Natural killer cell (primary cell): ENCODE measurements at regions of chr7 and their contacts with region 1.

Region 1: DNA sequence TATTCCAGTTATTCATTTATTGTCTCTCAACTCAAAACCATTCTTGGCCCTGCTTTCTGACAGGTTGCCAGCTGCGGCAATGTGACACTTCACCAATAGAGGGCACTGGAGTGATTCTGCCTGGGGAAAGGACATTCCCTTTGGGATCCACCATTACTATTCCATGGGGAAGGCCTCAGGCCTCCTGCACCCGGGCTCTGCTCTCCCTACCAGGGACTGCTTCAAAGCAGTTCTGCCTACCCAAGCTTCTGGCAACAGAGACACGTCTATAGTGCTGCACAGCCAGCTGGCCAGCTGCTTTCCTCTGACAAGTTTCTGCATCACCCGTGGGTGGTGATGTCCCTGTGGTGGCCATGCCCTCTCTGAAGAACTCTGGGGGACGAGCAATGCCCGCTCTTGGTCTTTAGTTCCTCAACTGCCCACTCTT is 163.8 kb downstream of the ELMO1 start:
- DNase-seq: peak in 1 of 2 donors; percentile 64
- ATAC-seq: peak in 1 of 3 donors; percentile 49
- H3K4me3 ChIP-seq: no peak overlapping the region
- H3K4me3 Mint-ChIP-seq: no peak overlapping the region
- H3K27ac ChIP-seq: no peak overlapping the region
- H3K27ac Mint-ChIP-seq: peak overlapping the region in 1 of 2 donors; percentile 23
- H3K4me1 ChIP-seq: peaks cover 11% of the 10 kb centered on the region
- H3K4me1 Mint-ChIP-seq: peaks cover 58 to 64% of the 10 kb centered on the region in 2 donors
- H3K27me3 ChIP-seq: no peaks in the 10 kb centered on the region
- H3K27me3 Mint-ChIP-seq: no peaks in the 10 kb centered on the region
- CTCF ChIP-seq: peak; percentile 79

Region 2: DNA sequence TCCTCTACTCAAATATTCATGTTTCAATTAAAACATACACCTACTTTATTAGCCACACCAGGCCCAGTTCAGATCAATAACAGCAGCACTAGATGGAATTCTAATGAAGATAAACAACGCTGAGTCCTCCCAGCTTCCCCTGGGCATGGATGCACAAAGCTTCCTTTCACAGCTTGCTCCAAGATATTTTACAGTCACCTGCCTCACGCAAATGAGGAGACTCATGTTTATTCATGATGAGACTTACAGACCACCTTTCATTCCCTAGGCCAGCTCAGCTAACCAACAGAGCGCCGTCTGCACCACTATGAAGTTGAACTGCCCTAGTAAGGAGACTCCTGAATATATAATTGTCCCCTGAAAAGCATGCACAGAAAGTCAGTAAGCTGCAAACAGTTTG is 277.6 kb before region 1 on chr7:
- intact Hi-C with region 1: no loop called
- DNase-seq: no peak
- ATAC-seq: no peak
- H3K4me3 ChIP-seq: no peak overlapping the region
- H3K4me3 Mint-ChIP-seq: no peak overlapping the region
- H3K27ac ChIP-seq: no peak overlapping the region
- H3K27ac Mint-ChIP-seq: no peak overlapping the region
- H3K4me1 ChIP-seq: no peaks in the 10 kb centered on the region
- H3K4me1 Mint-ChIP-seq: peaks cover 33 to 39% of the 10 kb centered on the region in 2 donors
- H3K27me3 ChIP-seq: no peaks in the 10 kb centered on the region
- H3K27me3 Mint-ChIP-seq: no peaks in the 10 kb centered on the region
- CTCF ChIP-seq: no peak

Region 3: DNA sequence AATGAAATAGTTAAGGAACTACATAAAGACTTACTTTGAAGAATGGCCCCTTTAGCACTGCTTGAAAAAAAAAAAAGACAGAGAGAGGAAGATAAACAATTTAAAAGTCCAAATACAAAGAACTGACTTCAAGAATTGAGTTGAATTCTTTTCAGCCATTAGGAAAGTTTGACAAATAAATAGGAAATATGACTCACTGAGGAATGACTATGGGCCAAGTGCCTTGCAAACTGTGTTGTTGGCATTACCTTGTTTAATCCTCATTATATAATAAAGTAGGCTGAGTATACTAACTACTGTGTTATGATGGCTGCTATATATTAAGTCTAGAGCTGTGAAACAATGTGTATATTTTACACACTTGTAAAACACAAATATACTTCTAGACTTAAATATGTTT is 12.7 kb after region 1 on chr7:
- intact Hi-C with region 1: no loop called
- DNase-seq: no peak
- ATAC-seq: no peak
- H3K4me3 ChIP-seq: no peak overlapping the region
- H3K4me3 Mint-ChIP-seq: no peak overlapping the region
- H3K27ac ChIP-seq: no peak overlapping the region
- H3K27ac Mint-ChIP-seq: no peak overlapping the region
- H3K4me1 ChIP-seq: no peaks in the 10 kb centered on the region
- H3K4me1 Mint-ChIP-seq: peaks cover 5 to 6% of the 10 kb centered on the region in 2 donors
- H3K27me3 ChIP-seq: no peaks in the 10 kb centered on the region
- H3K27me3 Mint-ChIP-seq: no peaks in the 10 kb centered on the region
- CTCF ChIP-seq: no peak

Region 4: DNA sequence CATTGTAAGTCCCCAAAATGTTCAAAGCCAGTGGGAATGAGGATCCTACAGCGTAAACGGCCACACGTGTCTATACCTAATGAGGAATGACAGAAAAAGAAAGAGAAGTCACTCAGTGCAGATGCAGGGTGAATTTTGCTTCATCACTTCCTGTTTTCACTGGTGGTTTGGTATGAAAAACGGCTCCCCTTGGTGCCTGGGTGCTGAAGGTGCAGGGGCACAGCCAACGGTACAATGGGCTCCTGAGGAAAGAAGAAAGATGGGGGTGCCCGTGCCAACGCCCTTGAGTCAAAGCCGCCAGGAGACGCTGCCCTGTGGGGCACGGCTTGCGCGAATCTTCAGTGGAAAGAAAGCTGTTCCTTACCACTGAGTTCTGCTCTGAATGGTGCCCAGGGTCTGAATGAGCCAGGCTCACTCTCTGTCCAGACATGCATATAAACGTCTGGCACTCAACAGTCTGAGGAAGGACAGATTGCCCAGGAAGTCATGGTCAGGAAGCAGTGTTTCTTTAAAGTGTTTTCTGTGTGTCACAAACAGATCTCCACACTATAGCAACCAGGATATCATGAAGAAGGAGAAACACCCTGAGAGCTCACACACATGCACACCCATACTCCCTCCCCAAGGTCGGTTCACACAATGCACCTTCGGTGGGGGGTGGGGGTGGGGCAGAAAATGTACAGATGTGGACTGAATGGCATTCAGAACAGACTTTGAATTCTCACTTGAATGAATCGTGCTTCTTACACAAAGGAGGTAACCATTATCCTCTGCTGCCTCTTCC is 58.1 kb after region 1 on chr7:
- intact Hi-C with region 1: loop called (anchors 2 kb)
- DNase-seq: peak; percentile 38 to 85
- ATAC-seq: peak; percentile 83 to 91 (median 84)
- H3K4me3 ChIP-seq: peak overlapping the region; percentile 47
- H3K4me3 Mint-ChIP-seq: peak overlapping the region; percentile 88
- H3K27ac ChIP-seq: peak overlapping the region; percentile 62
- H3K27ac Mint-ChIP-seq: peak overlapping the region; percentile 84 to 91
- H3K4me1 ChIP-seq: peaks cover 22% of the 10 kb centered on the region
- H3K4me1 Mint-ChIP-seq: peaks cover 34 to 36% of the 10 kb centered on the region in 2 donors
- H3K27me3 ChIP-seq: no peaks in the 10 kb centered on the region
- H3K27me3 Mint-ChIP-seq: no peaks in the 10 kb centered on the region
- CTCF ChIP-seq: no peak

Region 5: GRCh38 chr7:37495574-37496184 is 210.9 kb after region 1 on chr7:
- intact Hi-C with region 1: loop called (anchors 5 kb)
- DNase-seq: peak in 1 of 2 donors; percentile 60
- ATAC-seq: peak in 2 of 3 donors; percentile 40 to 51
- H3K4me3 ChIP-seq: no peak overlapping the region
- H3K4me3 Mint-ChIP-seq: no peak overlapping the region
- H3K27ac ChIP-seq: no peak overlapping the region
- H3K27ac Mint-ChIP-seq: no peak overlapping the region
- H3K4me1 ChIP-seq: no peaks in the 10 kb centered on the region
- H3K4me1 Mint-ChIP-seq: no peaks in the 10 kb centered on the region
- H3K27me3 ChIP-seq: no peaks in the 10 kb centered on the region
- H3K27me3 Mint-ChIP-seq: no peaks in the 10 kb centered on the region
- CTCF ChIP-seq: peak; percentile 94